Activated B cell treated with CpG ODN at 0.5 μM for 24 hours (primary cell): ENCODE measurements at regions of chr17 and their contacts with region 1.

Region 1: GRCh38 chr17:21126645-21127510 is at the start of gene DHRS7B:
- DNase-seq: peak; percentile 95
- ATAC-seq: peak; percentile 90
- H3K4me3 Mint-ChIP-seq: peak within 1 kb of the TSS; percentile 94
- H3K27ac Mint-ChIP-seq: peak within 1 kb of the TSS; percentile 91
- H3K4me1 Mint-ChIP-seq: peaks cover 35% of the 10 kb centered on the region
- H3K27me3 Mint-ChIP-seq: peaks cover 3% of the 10 kb centered on the region
- CTCF ChIP-seq: no peak
- total RNA-seq, gene DHRS7B: 11.8 and 12.1 TPM in 2 replicates

Region 2: GRCh38 chr17:21149621-21150020 is 22.7 kb after region 1 on chr17:
- CTCF ChIA-PET with region 1: no interaction called
- POLR2A ChIA-PET with region 1: interaction called, 4 read pairs
- intact Hi-C with region 1: loop called (anchors 2 kb)
- DNase-seq: no peak
- ATAC-seq: no peak
- H3K4me3 Mint-ChIP-seq: no peak overlapping the region
- H3K27ac Mint-ChIP-seq: no peak overlapping the region
- H3K4me1 Mint-ChIP-seq: peaks cover 13% of the 10 kb centered on the region
- H3K27me3 Mint-ChIP-seq: no peaks in the 10 kb centered on the region
- CTCF ChIP-seq: no peak

Region 3: GRCh38 chr17:21252796-21253645 is 126.1 kb after region 1 on chr17 and contains the start of gene NATD1:
- CTCF ChIA-PET with region 1: no interaction called
- POLR2A ChIA-PET with region 1: no interaction called
- intact Hi-C with region 1: loop called (anchors 1 kb)
- DNase-seq: peak; percentile 65
- ATAC-seq: peak; percentile 78
- H3K4me3 Mint-ChIP-seq: peak within 1 kb of the TSS; percentile 82
- H3K27ac Mint-ChIP-seq: peak within 1 kb of the TSS; percentile 76
- H3K4me1 Mint-ChIP-seq: peaks cover 21% of the 10 kb centered on the region
- H3K27me3 Mint-ChIP-seq: no peaks in the 10 kb centered on the region
- CTCF ChIP-seq: no peak
- total RNA-seq, gene NATD1: 1.5 and 1.7 TPM in 2 replicates

Region 4: GRCh38 chr17:21551081-21551881 is 424.4 kb after region 1 on chr17:
- CTCF ChIA-PET with region 1: no interaction called
- POLR2A ChIA-PET with region 1: no interaction called
- intact Hi-C with region 1: loop called (anchors 1 kb)
- DNase-seq: peak; percentile 75
- ATAC-seq: peak; percentile 97
- H3K4me3 Mint-ChIP-seq: peak overlapping the region; percentile 84
- H3K27ac Mint-ChIP-seq: no peak overlapping the region
- H3K4me1 Mint-ChIP-seq: peaks cover 11% of the 10 kb centered on the region
- H3K27me3 Mint-ChIP-seq: peaks cover 33% of the 10 kb centered on the region
- CTCF ChIP-seq: no peak